ENCODE measurements at regions of chr11 and their contacts with region 1.

Region 1: DNA sequence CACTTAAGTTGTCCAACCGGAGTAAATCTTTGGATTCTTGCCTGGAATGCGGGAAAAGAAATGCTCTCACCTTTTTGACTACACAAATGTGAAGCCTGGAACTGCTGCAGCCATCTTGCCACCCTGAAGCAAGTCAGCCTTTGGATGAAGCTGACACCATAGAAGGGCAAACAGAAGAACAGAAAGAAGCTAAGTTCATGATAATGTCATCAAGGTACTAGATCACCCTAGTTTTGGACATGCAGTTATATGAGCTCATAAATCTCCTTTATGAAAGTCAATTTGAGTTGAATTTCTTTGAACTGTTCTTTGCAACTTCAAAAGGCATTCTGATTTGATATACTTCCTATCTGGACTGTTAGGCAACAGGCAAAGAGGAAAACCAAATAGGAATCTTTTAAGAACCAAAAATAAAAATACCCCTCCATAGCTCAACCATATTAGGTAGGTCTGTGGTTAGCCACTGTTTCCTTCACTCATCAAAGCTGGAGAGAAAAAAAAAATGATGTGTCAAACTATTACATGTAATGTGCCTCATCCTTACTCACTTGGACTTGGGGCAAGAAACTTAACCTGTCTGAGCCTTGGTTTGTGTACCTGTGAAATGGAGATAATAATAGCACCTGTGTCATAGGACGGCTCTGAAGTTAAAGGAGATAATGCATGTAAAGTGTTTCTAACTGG is 91.9 kb downstream of the WT1 start:
- DNase-seq: no peak
- ATAC-seq: no peak
- H3K4me3 ChIP-seq: no peak overlapping the region
- H3K27ac ChIP-seq: no peak overlapping the region
- H3K4me1 ChIP-seq: no peaks in the 10 kb centered on the region
- H3K27me3 ChIP-seq: 0 out of 2 replicates have a peak, but pooled peaks cover 2% of the 10 kb centered on the region
- CTCF ChIP-seq: no peak

Region 2: GRCh38 chr11:32310199-32310571 is 33.3 kb before region 1 on chr11:
- CTCF ChIA-PET with region 1: no interaction called
- POLR2A ChIA-PET with region 1: no interaction called
- in situ Hi-C with region 1: no loop called
- intact Hi-C with region 1: no loop called
- DNase-seq: no peak
- ATAC-seq: no peak
- H3K4me3 ChIP-seq: no peak overlapping the region
- H3K27ac ChIP-seq: no peak overlapping the region
- H3K4me1 ChIP-seq: peaks cover 22% of the 10 kb centered on the region
- H3K27me3 ChIP-seq: no peaks in the 10 kb centered on the region
- CTCF ChIP-seq: no peak

Region 3: DNA sequence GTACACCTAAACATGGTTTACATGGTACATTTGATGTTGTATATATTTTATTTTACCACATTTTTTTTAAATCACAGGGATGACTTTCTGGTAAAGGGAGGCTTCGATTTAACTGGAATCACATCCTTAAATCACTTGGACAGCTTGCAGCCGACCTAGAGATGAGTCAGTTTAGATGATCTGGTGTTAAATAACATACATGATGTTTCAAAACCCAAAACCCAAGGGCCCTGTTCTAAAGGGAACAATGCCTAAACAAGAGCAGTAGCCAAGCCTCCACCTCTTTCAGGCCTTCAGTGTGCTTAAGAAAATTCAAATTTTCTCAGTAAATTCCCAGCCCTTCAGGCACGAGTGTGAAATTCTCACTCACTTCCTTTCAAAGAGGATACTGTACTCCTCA is 16.9 kb before region 1 on chr11:
- CTCF ChIA-PET with region 1: interaction called, 6 read pairs
- POLR2A ChIA-PET with region 1: interaction called, 19 read pairs
- in situ Hi-C with region 1: no loop called
- intact Hi-C with region 1: no loop called
- DNase-seq: no peak
- ATAC-seq: no peak
- H3K4me3 ChIP-seq: no peak overlapping the region
- H3K27ac ChIP-seq: no peak overlapping the region
- H3K4me1 ChIP-seq: no peaks in the 10 kb centered on the region
- H3K27me3 ChIP-seq: no peaks in the 10 kb centered on the region
- CTCF ChIP-seq: no peak